Activated CD4-positive, alpha-beta T cell treated with anti-CD3 and anti-CD28 coated beads for 36 hours (primary cell): ENCODE measurements at regions of chr18 and their contacts with region 1.

Region 1: DNA sequence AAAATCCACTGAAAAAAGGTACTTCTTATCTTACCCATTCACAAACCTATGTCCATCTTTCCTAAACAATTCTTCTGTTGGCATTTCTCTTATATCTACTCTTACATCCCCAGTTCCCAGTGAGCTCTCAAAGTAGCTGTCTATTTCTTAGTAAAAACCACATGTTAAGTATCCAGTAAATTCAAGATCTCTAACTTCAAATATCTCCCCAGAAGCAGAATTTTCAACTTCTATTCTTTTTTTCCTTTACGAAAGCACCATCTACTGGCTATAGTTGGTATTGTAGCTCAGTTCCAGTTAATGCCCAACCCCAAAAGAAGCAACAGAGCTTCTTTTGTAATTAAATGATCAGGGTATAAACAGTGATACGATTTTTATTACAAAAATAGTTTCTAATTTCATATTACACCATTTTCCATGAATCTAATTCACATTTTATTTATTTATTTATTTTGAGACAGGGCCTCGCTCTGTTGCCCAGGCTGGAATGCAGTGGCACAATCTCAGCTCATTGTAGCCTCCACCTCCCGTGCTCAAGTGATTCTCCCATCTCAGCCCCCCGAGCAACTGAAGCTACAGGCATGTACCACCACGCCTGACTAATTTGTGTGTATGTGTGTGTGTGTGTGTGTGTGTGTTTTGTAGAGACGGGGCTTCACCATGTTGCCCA is 28.5 kb downstream of the HRH4 start:
- DNase-seq: no peak
- ATAC-seq: peak; percentile 45
- H3K4me3 Mint-ChIP-seq: no peak overlapping the region
- H3K27ac Mint-ChIP-seq: peak overlapping the region; percentile 40
- H3K4me1 Mint-ChIP-seq: peaks cover 16% of the 10 kb centered on the region
- H3K27me3 Mint-ChIP-seq: peaks cover 23% of the 10 kb centered on the region

Region 2: DNA sequence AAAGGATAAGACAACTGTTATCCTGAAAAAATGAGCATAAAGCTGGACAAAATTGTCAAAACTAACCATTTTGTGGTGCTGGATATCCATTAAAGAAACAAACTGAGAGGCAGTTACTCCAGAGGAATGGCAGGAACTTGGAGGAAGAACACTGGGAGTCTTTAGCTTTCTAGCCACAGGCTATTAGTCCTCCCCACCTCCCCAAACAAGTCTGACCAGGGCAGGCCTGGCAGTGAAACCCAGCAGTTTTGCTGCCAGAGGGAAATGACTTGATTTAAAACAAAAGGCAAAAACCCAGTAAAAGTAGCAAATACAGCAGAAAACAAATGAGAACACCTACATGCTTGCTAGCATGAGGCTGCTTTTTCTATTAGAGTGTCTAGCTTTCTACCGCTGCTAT is 126.2 kb before region 1 on chr18:
- CTCF ChIA-PET with region 1: interaction called, 209 read pairs
- POLR2A ChIA-PET with region 1: interaction called, 3 read pairs
- intact Hi-C with region 1: loop called (anchors 1 kb)
- DNase-seq: no peak
- ATAC-seq: no peak
- H3K4me3 Mint-ChIP-seq: no peak overlapping the region
- H3K27ac Mint-ChIP-seq: no peak overlapping the region
- H3K4me1 Mint-ChIP-seq: peaks cover 3% of the 10 kb centered on the region
- H3K27me3 Mint-ChIP-seq: no peaks in the 10 kb centered on the region

Region 3: DNA sequence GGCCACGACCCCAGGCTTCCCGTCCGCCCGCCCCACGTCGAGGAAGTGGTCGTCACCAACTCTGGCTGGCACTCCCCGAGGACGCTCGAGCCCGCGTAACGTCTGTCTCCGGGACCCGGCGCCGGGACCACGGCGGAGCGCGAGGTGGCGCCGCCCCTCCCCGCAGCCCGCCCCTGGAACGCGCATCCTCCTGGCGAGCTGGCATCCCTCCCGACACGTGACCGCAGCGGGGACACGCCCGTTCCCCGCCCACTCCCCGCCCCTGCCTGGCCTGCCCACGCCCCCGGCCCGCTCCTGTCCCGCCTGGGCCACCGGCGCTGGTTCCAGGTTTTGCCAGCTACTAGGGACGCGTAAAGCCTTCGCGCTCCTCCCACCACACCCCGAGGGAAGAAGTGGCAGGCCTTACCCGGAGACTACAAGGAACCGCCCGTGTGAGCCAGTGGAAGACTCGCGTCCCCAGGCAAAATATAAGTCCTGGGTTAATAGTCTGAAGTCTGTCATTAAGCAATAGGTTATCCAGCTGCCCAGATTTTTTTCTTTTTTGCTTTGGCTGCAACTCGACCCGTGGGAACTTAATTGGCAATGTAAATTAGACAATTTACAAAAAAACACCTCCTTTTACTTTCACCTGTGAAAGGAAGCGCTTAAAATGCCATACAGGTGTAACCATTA is 91.1 kb before region 1 on chr18 and contains the start of gene OSBPL1A:
- CTCF ChIA-PET with region 1: interaction called, 11 read pairs
- POLR2A ChIA-PET with region 1: no interaction called
- intact Hi-C with region 1: no loop called
- DNase-seq: peak; percentile 88
- ATAC-seq: peak; percentile 86
- H3K4me3 Mint-ChIP-seq: peak within 1 kb of the TSS; percentile 76
- H3K27ac Mint-ChIP-seq: peak within 1 kb of the TSS; percentile 59
- H3K4me1 Mint-ChIP-seq: peaks cover 28% of the 10 kb centered on the region
- H3K27me3 Mint-ChIP-seq: peaks cover 16% of the 10 kb centered on the region
- total RNA-seq, gene OSBPL1A: 2.9 to 3.4 TPM

Region 4: DNA sequence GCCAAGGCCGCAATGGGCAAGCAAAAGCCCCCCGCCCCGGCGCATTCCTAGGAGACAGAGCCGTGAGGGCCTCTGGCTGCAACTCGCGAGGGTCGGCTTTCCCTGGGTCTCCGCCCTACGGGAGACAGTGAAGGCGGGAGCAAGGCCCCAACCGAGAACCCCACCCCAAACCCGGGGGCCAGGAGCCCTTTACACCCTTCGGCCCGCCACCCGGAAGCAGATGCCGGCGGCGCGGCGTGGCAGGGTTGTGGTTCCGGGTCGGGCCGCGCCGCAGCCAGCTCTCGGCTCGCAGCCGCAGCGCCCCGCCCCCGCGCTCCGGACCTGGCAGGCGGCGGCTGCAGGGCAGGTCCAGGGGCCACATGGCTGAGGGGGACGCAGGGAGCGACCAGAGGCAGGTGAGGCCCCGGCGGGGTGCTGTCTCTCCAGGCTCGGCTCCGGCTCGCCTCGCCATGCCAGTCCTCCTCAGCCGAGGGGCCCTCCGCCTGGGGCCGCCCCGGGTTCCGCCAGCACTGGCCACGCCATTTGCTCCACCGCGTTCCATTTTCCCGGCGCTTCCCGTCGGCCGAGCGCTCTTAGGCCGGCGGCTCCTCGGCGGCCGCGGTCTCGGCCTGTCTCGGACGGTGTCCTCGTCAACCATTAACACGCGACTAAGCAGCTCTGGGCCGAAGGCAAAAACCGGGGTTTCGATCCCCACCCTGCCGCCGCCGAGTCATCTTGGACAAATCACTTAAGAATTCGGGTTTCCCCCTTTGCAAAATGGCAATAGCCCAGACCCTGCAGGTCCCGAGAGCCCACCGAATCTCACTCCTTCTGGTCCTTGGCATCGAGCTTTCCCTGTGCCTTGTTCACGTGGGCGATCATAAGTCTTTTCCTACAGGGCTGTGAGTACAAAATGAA is 62.3 kb before region 1 on chr18 and contains the start of gene IMPACT:
- CTCF ChIA-PET with region 1: interaction called, 4 read pairs
- POLR2A ChIA-PET with region 1: no interaction called
- intact Hi-C with region 1: loop called in 1 of 2 experiments (anchors 5 kb)
- DNase-seq: peak; percentile 86
- ATAC-seq: peak; percentile 94
- H3K4me3 Mint-ChIP-seq: peak within 1 kb of the TSS; percentile 85
- H3K27ac Mint-ChIP-seq: peak within 1 kb of the TSS; percentile 90
- H3K4me1 Mint-ChIP-seq: peaks cover 29% of the 10 kb centered on the region
- H3K27me3 Mint-ChIP-seq: peaks cover 19% of the 10 kb centered on the region
- total RNA-seq, gene IMPACT: 15.4 to 18.3 TPM

Region 5: GRCh38 chr18:24462838-24463775 is 25.9 kb before region 1 on chr18:
- CTCF ChIA-PET with region 1: interaction called, 20 read pairs
- POLR2A ChIA-PET with region 1: no interaction called
- intact Hi-C with region 1: no loop called
- DNase-seq: no peak
- ATAC-seq: no peak
- H3K4me3 Mint-ChIP-seq: no peak overlapping the region
- H3K27ac Mint-ChIP-seq: no peak overlapping the region
- H3K4me1 Mint-ChIP-seq: peaks cover 17% of the 10 kb centered on the region
- H3K27me3 Mint-ChIP-seq: peaks cover 6% of the 10 kb centered on the region